ENCODE measurements at regions of chr20 and their contacts with region 1.

Region 1: GRCh38 chr20:63580796-63581461 is 6.9 kb upstream of the HELZ2 start:
- DNase-seq: peak; percentile 31
- H3K4me3 ChIP-seq: no peak overlapping the region
- H3K27ac ChIP-seq: no peak overlapping the region
- H3K27me3 ChIP-seq: no peaks in the 10 kb centered on the region
- CTCF ChIP-seq: peak; percentile 73

Region 2: GRCh38 chr20:63698739-63699465 is 118.0 kb after region 1 on chr20:
- in situ Hi-C with region 1: loop called (anchors 25 kb)
- DNase-seq: peak; percentile 86
- H3K4me3 ChIP-seq: peak overlapping the region; percentile 12
- H3K27ac ChIP-seq: peak overlapping the region; percentile 90
- H3K27me3 ChIP-seq: no peaks in the 10 kb centered on the region
- CTCF ChIP-seq: no peak

Region 3: GRCh38 chr20:63894358-63895201 is 313.7 kb after region 1 on chr20 and contains the start of gene DNAJC5:
- in situ Hi-C with region 1: loop called (anchors 25 kb)
- DNase-seq: peak; percentile 79
- H3K4me3 ChIP-seq: peak within 1 kb of the TSS; percentile 64
- H3K27ac ChIP-seq: peak within 1 kb of the TSS; percentile 48
- H3K27me3 ChIP-seq: no peaks in the 10 kb centered on the region
- CTCF ChIP-seq: no peak